ENCODE measurements at regions of chr10 and their contacts with region 1.

Region 1: DNA sequence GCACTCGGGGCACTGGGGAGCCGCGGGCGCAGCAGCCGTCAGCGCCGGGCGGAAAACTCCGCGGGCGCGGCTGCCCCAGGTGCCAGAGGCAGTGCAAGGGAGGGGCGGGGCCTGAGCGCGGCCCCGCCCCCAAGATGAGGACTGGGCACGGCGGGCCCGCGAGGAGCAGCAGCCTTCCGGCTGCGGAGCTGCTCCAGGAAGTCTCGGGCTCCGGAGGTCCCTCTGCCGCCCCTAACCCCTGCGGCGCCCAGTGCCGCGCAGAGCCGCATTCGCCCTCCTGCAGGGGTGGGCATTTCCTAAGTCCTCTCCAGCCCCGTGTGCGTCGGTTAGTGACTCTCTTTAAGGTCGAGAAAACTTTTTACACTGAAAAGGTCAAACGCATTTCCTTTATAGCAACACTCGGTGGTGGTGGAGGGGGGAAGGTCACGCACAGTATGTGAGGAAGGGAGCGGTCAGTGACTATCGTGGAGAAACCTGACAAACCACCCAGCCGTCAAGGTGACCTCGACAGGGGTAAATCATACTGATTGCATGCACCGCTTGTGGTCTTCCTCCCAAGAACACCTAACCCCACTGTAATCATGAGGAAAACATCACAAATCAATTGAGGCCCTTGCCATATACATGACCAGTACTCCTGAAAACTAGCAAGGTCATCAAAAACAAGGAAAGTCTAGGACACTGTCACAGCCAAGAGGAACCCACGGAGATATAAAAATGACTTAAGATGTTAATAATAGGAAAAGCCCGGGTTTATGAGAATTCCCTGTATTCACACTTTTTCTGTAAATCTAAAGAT is at the start of gene ANXA11:
- DNase-seq: peak; percentile 70 to 93 (median 87)
- ATAC-seq: peak; percentile 82
- H3K4me3 ChIP-seq: peak within 1 kb of the TSS; percentile 67 to 70
- H3K4me3 Mint-ChIP-seq: peak within 1 kb of the TSS; percentile 96
- H3K27ac ChIP-seq: peak within 1 kb of the TSS; percentile 72 to 82
- H3K27ac Mint-ChIP-seq: peak within 1 kb of the TSS; percentile 94
- H3K4me1 ChIP-seq: peaks cover 49% of the 10 kb centered on the region
- H3K4me1 Mint-ChIP-seq: peaks cover 54% of the 10 kb centered on the region
- H3K27me3 ChIP-seq: no peaks in the 10 kb centered on the region
- H3K27me3 Mint-ChIP-seq: no peaks in the 10 kb centered on the region
- CTCF ChIP-seq: no peak
- total RNA-seq, gene ANXA11: 136 to 141 TPM

Region 2: GRCh38 chr10:80078448-80079311 is 127.0 kb before region 1 on chr10 and contains the start of gene TMEM254:
- CTCF ChIA-PET with region 1: no interaction called
- POLR2A ChIA-PET with region 1: interaction called, 3 read pairs
- intact Hi-C with region 1: loop called (anchors 1 to 5 kb)
- DNase-seq: peak; percentile 73 to 92 (median 90)
- ATAC-seq: peak; percentile 85
- H3K4me3 ChIP-seq: peak within 1 kb of the TSS; percentile 90 to 100
- H3K4me3 Mint-ChIP-seq: peak within 1 kb of the TSS; percentile 88
- H3K27ac ChIP-seq: peak within 1 kb of the TSS; percentile 85 to 91
- H3K27ac Mint-ChIP-seq: peak within 1 kb of the TSS; percentile 91
- H3K4me1 ChIP-seq: peaks cover 6% of the 10 kb centered on the region
- H3K4me1 Mint-ChIP-seq: peaks cover 21% of the 10 kb centered on the region
- H3K27me3 ChIP-seq: no peaks in the 10 kb centered on the region
- H3K27me3 Mint-ChIP-seq: no peaks in the 10 kb centered on the region
- CTCF ChIP-seq: no peak
- total RNA-seq, gene TMEM254: 3.5 to 4.0 TPM

Region 3: DNA sequence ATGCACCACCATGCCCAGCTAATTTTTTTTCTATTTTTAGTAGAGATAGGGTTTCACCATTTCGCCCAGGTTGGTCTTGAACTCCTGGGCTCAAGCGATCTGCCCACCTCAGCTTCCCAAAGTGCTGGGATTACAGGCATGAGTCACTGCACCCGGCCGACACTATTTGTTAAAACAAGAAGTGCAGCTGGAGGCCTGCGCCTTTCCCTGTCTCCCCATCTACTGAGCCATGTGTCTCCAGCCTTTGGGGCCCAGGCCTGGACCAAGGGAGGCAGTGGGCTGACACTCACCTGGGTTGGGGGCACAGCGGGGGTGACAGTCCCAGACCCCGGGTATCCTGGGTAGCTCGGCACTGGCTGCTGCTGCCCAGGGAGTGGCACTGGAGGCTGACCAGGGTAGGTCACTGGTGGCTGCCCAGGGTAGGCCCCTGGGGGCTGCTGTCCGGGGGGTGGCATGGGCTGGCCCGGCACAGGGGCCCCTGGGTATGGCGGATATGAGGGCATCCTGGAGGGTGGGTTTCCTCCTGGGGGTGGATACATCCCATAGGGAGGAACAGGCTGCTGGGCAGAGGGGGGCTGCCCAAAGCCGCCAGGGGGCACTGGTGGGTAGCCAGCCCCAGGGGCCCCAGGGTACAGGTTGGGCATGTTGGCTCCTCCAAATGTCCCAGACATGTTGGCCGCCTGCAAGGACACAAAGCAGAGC is 36.8 kb before region 1 on chr10:
- CTCF ChIA-PET with region 1: interaction called, 4 read pairs
- POLR2A ChIA-PET with region 1: interaction called, 4 read pairs
- intact Hi-C with region 1: loop called in 1 of 2 experiments (anchors 5 kb)
- DNase-seq: peak in 3 of 9 experiments; percentile 28 to 44 (median 44)
- ATAC-seq: no peak
- H3K4me3 ChIP-seq: no peak overlapping the region
- H3K4me3 Mint-ChIP-seq: no peak overlapping the region
- H3K27ac ChIP-seq: no peak overlapping the region
- H3K27ac Mint-ChIP-seq: no peak overlapping the region
- H3K4me1 ChIP-seq: peaks cover 4% of the 10 kb centered on the region
- H3K4me1 Mint-ChIP-seq: peaks cover 22% of the 10 kb centered on the region
- H3K27me3 ChIP-seq: no peaks in the 10 kb centered on the region
- H3K27me3 Mint-ChIP-seq: no peaks in the 10 kb centered on the region
- CTCF ChIP-seq: no peak

Region 4: GRCh38 chr10:80289451-80290287 is 84.0 kb after region 1 on chr10 and contains the start of gene MAT1A:
- CTCF ChIA-PET with region 1: no interaction called
- POLR2A ChIA-PET with region 1: no interaction called
- intact Hi-C with region 1: no loop called
- DNase-seq: no peak
- ATAC-seq: no peak
- H3K4me3 ChIP-seq: no peak within 1 kb of the TSS
- H3K4me3 Mint-ChIP-seq: no peak within 1 kb of the TSS
- H3K27ac ChIP-seq: no peak within 1 kb of the TSS
- H3K27ac Mint-ChIP-seq: no peak within 1 kb of the TSS
- H3K4me1 ChIP-seq: no peaks in the 10 kb centered on the region
- H3K4me1 Mint-ChIP-seq: no peaks in the 10 kb centered on the region
- H3K27me3 ChIP-seq: no peaks in the 10 kb centered on the region
- H3K27me3 Mint-ChIP-seq: peaks cover 7% of the 10 kb centered on the region
- CTCF ChIP-seq: no peak
- total RNA-seq, gene MAT1A: not detected

Region 5: DNA sequence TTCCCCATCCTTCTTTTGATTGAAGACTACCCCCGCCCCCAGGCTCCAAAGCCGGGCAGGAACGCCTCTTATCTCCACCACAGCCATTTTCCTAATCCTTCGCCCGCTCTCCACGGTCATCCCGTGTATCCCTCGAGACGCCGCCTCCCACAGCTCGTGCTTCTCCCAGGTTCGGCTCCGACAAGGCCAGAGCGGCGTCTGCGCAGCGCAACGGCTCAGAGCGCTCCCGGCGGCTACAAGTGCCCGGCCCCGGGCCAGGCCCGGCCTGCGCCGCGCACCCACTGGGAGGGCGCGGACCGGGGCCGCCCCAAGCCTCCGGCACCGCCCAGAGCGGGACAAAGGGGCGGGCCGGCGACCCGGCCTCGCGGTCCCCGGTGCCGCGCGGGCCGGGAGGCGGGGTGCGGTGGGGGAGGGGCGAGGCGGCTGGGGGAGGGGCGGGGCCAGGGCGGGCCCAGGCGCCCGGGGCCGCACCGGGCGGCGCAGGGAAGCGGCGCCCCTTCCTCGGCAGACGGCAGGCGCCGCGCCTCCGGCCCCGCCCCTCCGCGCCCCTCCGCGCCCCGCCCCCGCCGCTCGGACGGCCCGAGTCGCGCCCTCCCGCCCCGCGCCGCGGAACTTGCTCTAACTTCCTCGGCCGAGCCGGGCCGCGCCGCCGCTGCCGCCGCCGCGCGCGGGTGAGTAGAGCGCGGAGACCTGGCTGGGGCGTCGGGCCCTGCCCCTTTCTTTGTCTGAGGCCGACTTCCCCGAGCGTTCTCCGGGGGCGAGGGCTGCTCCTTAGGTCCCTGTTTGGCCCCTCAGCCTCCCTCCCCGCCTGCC is 248.2 kb after region 1 on chr10 and contains the start of gene TSPAN14:
- CTCF ChIA-PET with region 1: no interaction called
- POLR2A ChIA-PET with region 1: no interaction called
- intact Hi-C with region 1: loop called (anchors 10 kb)
- DNase-seq: peak; percentile 32 to 88 (median 73)
- ATAC-seq: peak; percentile 65
- H3K4me3 ChIP-seq: peak within 1 kb of the TSS; percentile 75 to 92
- H3K4me3 Mint-ChIP-seq: peak within 1 kb of the TSS; percentile 99
- H3K27ac ChIP-seq: peak within 1 kb of the TSS; percentile 53 to 74
- H3K27ac Mint-ChIP-seq: peak within 1 kb of the TSS; percentile 98
- H3K4me1 ChIP-seq: peaks cover 42% of the 10 kb centered on the region
- H3K4me1 Mint-ChIP-seq: peaks cover 41% of the 10 kb centered on the region
- H3K27me3 ChIP-seq: no peaks in the 10 kb centered on the region
- H3K27me3 Mint-ChIP-seq: no peaks in the 10 kb centered on the region
- CTCF ChIP-seq: no peak
- total RNA-seq, gene TSPAN14: 63.9 to 66.1 TPM

Region 6: GRCh38 chr10:80530251-80530650 is 324.6 kb after region 1 on chr10:
- CTCF ChIA-PET with region 1: no interaction called
- POLR2A ChIA-PET with region 1: no interaction called
- intact Hi-C with region 1: loop called in 1 of 2 experiments (anchors 10 kb)
- DNase-seq: peak in 6 of 9 experiments; percentile 9 to 65 (median 42)
- ATAC-seq: peak; percentile 62
- H3K4me3 ChIP-seq: no peak overlapping the region
- H3K4me3 Mint-ChIP-seq: peak overlapping the region; percentile 72
- H3K27ac ChIP-seq: peak overlapping the region in 1 of 2 experiments; percentile 14
- H3K27ac Mint-ChIP-seq: peak overlapping the region; percentile 88
- H3K4me1 ChIP-seq: peaks cover 74% of the 10 kb centered on the region
- H3K4me1 Mint-ChIP-seq: peaks cover 71% of the 10 kb centered on the region
- H3K27me3 ChIP-seq: no peaks in the 10 kb centered on the region
- H3K27me3 Mint-ChIP-seq: no peaks in the 10 kb centered on the region
- CTCF ChIP-seq: peak; percentile 27

Region 7: DNA sequence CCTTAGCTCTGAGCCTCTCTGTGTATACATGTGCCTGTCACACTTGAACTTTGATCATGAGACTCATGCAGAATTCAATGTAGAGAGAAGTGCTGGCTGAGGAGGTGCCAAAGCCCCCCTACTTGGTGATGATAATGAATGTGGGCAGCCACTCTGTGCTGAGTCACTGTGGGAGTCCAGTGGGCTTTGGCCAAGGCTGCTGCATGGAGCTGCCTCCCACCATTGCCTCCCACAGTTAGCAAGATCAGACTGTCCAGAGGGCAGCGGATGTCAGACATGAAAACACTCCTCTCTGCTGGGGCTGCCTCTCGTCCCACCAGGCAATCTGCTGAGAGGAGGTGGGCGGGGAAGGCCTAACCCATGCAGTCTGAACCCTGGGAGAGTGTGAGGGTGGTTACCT is 512.3 kb after region 1 on chr10:
- CTCF ChIA-PET with region 1: no interaction called
- POLR2A ChIA-PET with region 1: no interaction called
- intact Hi-C with region 1: no loop called
- DNase-seq: no peak
- ATAC-seq: no peak
- H3K4me3 ChIP-seq: no peak overlapping the region
- H3K4me3 Mint-ChIP-seq: no peak overlapping the region
- H3K27ac ChIP-seq: no peak overlapping the region
- H3K27ac Mint-ChIP-seq: no peak overlapping the region
- H3K4me1 ChIP-seq: no peaks in the 10 kb centered on the region
- H3K4me1 Mint-ChIP-seq: no peaks in the 10 kb centered on the region
- H3K27me3 ChIP-seq: no peaks in the 10 kb centered on the region
- H3K27me3 Mint-ChIP-seq: peaks cover 2% of the 10 kb centered on the region
- CTCF ChIP-seq: no peak

Region 8: GRCh38 chr10:80739963-80740715 is 534.5 kb after region 1 on chr10:
- CTCF ChIA-PET with region 1: no interaction called
- POLR2A ChIA-PET with region 1: no interaction called
- intact Hi-C with region 1: no loop called
- DNase-seq: no peak
- ATAC-seq: no peak
- H3K4me3 ChIP-seq: no peak overlapping the region
- H3K4me3 Mint-ChIP-seq: no peak overlapping the region
- H3K27ac ChIP-seq: no peak overlapping the region
- H3K27ac Mint-ChIP-seq: no peak overlapping the region
- H3K4me1 ChIP-seq: no peaks in the 10 kb centered on the region
- H3K4me1 Mint-ChIP-seq: no peaks in the 10 kb centered on the region
- H3K27me3 ChIP-seq: no peaks in the 10 kb centered on the region
- H3K27me3 Mint-ChIP-seq: peaks cover 20% of the 10 kb centered on the region
- CTCF ChIP-seq: no peak